Activated T-helper 2 cell treated with anti-CD3 and anti-CD28 coated beads, Interferon-gamma antibody, Interleukin-2, Interleukin-4, amounts not matched to agents 10 μg/mL and 5 μg/mL and 100 μg/mL, durations not matched to agents 14 hours and 24 hours and 36 hours (primary cell): ENCODE measurements at regions of chr20 and their contacts with region 1.

Region 1: DNA sequence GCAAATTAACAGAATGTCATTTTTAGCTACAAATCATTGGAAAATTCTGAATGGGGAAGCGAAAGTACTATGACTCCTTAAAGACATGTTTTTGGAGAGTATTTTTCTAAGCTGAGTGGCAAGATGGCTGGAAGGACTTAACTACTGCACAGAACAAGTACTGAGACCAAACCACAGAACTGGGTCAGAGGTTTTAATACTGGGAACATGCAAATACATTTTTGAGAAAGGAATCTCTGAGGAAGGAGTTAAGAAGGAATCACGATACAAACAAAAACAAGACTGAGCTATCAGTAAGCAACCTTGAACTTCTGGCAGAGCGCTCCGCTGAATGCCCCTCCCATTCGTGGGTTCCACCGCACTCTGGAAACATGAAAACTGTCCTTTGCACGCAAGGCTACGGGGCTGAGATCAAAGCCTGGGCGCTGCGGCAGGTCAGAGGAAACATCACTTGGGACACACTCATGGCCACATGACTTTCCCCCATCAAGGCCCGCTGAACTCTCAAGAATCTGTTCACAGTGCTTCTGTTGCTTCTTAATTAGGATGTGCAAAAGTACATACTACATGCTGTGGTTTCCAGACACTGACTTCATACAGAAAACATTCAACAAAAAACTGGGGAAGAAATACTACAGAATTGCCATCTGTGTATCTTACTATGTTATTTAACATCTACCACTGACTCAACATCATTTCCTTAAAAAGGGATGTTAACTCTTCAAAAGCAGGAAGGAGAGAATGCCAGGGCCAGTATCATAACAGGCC is 27.8 kb downstream of the SLC23A2 start:
- DNase-seq: peak; percentile 66
- H3K4me3 Mint-ChIP-seq: peak overlapping the region; percentile 69
- H3K27ac Mint-ChIP-seq: peak overlapping the region; percentile 85
- H3K4me1 Mint-ChIP-seq: peaks cover 17% of the 10 kb centered on the region
- H3K27me3 Mint-ChIP-seq: no peaks in the 10 kb centered on the region

Region 2: DNA sequence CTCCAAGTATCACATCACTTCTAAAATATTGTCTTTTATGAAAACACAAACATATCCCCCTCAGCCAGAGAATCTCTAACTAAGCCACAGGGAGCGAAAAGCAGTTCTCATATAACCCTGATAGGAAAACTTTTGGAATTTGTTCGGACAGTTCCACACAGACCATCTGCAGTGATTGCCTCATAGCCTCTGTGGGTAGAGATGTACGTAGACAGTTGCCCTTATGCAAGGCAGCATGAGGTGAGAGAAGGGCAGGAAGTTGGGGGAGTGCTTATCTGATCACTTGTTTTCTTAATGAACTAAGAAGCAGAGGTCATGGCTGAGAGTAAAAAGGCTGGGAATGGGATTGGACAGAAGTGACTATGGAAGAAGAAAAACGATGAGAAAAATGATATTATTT is 11.8 kb before region 1 on chr20:
- intact Hi-C with region 1: loop called (anchors 1 kb)
- DNase-seq: peak; percentile 17
- H3K4me3 Mint-ChIP-seq: peak overlapping the region; percentile 51
- H3K27ac Mint-ChIP-seq: peak overlapping the region; percentile 90
- H3K4me1 Mint-ChIP-seq: peaks cover 35% of the 10 kb centered on the region
- H3K27me3 Mint-ChIP-seq: no peaks in the 10 kb centered on the region